Activated naive CD4-positive, alpha-beta T cell treated with anti-CD3 and anti-CD28 coated beads for 36 hours (primary cell): ENCODE measurements at regions of chr2 and their contacts with region 1.

Region 1: DNA sequence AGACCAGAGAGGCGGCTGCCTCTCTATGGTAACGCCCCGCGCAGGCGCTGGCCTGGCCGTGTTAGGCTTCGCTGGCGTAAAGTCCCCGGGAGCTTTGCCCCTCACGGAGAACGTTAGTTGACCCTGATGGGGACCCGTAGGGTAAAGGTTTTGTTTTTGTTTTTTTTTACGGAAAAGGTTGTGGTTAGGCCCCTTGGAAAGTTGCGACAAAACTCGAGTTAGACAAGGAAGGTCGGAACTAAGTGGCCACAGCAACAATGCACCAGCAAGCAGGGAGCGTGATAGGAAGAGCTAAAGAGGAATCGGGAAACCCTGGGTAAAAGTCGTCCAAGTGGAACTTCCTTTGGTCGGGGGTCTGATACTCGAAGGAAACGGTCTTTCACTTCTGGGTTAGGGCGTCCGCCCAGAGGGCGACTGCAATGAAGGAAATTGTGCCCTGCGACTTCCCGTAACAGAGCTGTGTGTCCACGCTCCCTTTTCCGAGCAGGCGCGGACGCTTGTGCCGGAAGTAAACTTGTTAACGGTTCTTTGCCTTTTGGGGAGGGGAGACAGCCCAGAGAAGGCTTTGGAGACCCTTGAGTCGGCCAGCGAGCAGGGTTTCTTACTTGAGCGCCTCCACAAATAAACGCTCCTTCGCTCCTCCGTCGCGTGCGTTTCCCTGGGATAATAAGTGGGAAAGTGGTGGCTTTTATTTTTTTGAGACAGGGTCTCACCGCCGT is 493 bp upstream of the CLASP1 start:
- DNase-seq: peak; percentile 97
- H3K4me3 Mint-ChIP-seq: peak overlapping the region; percentile 98
- H3K27ac Mint-ChIP-seq: peak overlapping the region; percentile 99
- H3K4me1 Mint-ChIP-seq: peaks cover 63% of the 10 kb centered on the region
- H3K27me3 Mint-ChIP-seq: no peaks in the 10 kb centered on the region

Region 2: DNA sequence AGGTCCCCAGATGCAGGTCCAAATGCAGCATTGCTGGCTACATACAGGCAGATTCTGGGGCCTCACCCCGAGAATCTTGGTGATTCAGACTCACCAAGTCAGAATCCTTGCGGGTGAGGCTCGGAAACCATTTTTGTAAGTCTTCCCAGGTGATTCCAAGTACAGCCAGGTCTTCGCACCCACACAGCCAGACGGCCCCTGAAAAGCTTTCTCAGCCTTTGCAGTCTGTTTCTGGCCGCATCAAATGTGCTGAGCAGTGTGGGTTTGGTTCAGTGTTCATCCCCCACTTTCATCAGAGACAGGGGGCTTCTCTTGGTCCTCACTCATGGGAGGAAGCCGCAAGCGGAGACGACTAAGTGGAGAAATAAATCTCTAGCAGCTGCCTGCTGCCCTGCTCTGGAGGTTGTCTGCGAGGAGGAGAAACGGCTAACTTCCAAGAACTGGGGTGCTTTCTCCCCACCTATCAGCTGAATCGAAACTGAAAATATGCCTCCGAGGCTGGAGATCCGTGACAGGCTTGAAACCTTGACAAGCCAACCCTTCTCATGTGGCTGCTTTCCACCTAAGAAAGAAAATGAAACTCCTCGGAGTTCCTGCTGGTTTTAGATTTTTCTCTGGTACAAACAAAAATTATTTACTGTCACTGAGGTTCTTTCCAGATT is 1417.7 kb before region 1 on chr2:
- CTCF ChIA-PET with region 1: no interaction called
- intact Hi-C with region 1: loop called (anchors 5 kb)
- DNase-seq: peak; percentile 86
- H3K4me3 Mint-ChIP-seq: peak overlapping the region; percentile 82
- H3K27ac Mint-ChIP-seq: peak overlapping the region; percentile 94
- H3K4me1 Mint-ChIP-seq: peaks cover 47% of the 10 kb centered on the region
- H3K27me3 Mint-ChIP-seq: no peaks in the 10 kb centered on the region

Region 3: GRCh38 chr2:120833127-120833675 is 816.6 kb before region 1 on chr2:
- CTCF ChIA-PET with region 1: no interaction called
- intact Hi-C with region 1: no loop called
- DNase-seq: no peak
- H3K4me3 Mint-ChIP-seq: no peak overlapping the region
- H3K27ac Mint-ChIP-seq: no peak overlapping the region
- H3K4me1 Mint-ChIP-seq: no peaks in the 10 kb centered on the region
- H3K27me3 Mint-ChIP-seq: no peaks in the 10 kb centered on the region

Region 4: GRCh38 chr2:121555008-121555407 is 94.7 kb before region 1 on chr2:
- CTCF ChIA-PET with region 1: no interaction called
- intact Hi-C with region 1: no loop called
- DNase-seq: no peak
- H3K4me3 Mint-ChIP-seq: no peak overlapping the region
- H3K27ac Mint-ChIP-seq: no peak overlapping the region
- H3K4me1 Mint-ChIP-seq: peaks cover 35% of the 10 kb centered on the region
- H3K27me3 Mint-ChIP-seq: no peaks in the 10 kb centered on the region

Region 5: GRCh38 chr2:121596221-121597080 is 53.3 kb before region 1 on chr2:
- CTCF ChIA-PET with region 1: interaction called, 4 read pairs
- intact Hi-C with region 1: loop called (anchors 1 kb)
- DNase-seq: peak; percentile 61
- H3K4me3 Mint-ChIP-seq: peak overlapping the region; percentile 82
- H3K27ac Mint-ChIP-seq: peak overlapping the region; percentile 87
- H3K4me1 Mint-ChIP-seq: peaks cover 49% of the 10 kb centered on the region
- H3K27me3 Mint-ChIP-seq: no peaks in the 10 kb centered on the region

Region 6: GRCh38 chr2:121699421-121700333 is 49.9 kb after region 1 on chr2:
- CTCF ChIA-PET with region 1: no interaction called
- intact Hi-C with region 1: loop called (anchors 1 kb)
- DNase-seq: peak; percentile 96
- H3K4me3 Mint-ChIP-seq: peak overlapping the region; percentile 76
- H3K27ac Mint-ChIP-seq: peak overlapping the region; percentile 93
- H3K4me1 Mint-ChIP-seq: peaks cover 37% of the 10 kb centered on the region
- H3K27me3 Mint-ChIP-seq: no peaks in the 10 kb centered on the region

Region 7: GRCh38 chr2:121736462-121737341 is 86.9 kb after region 1 on chr2 and contains the start of gene NIFK:
- CTCF ChIA-PET with region 1: no interaction called
- intact Hi-C with region 1: loop called (anchors 1 kb)
- DNase-seq: peak; percentile 100
- H3K4me3 Mint-ChIP-seq: peak within 1 kb of the TSS; percentile 90
- H3K27ac Mint-ChIP-seq: peak within 1 kb of the TSS; percentile 93
- H3K4me1 Mint-ChIP-seq: peaks cover 41% of the 10 kb centered on the region
- H3K27me3 Mint-ChIP-seq: no peaks in the 10 kb centered on the region
- total RNA-seq, gene NIFK: 112 to 117 TPM